ENCODE measurements at regions of chrX and their contacts with region 1.

Region 1: DNA sequence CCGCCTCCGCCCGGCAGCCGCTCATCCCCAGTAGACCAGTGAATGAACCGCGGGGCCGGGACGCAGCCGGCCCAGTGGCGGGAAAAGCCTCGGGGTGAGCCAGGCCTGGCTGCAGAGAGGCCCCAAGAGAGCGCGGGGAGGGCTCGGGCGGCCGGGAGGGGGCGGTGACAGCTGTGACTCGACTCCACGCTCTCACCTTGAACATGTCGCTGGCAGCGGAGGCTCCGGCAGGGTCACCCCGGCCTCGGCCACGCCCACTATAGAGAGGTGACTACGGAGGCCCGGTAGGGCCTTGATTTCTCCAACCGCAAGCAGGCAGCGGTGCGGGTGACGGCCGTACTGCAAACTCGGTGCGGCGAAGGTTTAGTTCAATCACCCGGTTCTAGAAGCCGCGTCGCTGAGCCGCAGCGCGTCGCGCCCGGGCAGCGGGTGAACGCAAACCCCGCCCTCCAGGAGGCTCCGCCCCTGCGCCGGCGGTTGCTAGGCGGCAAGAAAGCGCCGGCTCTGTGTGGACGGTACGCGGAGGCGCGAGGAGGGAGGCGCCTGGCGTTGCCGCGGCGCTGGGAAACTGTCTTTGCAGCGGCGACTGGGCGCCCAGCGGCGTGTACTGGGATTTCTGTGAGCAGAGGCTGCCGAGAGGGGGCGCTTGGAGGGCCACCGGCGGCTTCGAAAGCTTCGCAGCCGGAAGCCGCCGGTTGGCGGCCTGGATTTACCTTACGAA is at the starts of genes APOO and CXorf58:
- DNase-seq: peak; percentile 95
- ATAC-seq: peak; percentile 98 to 99
- H3K4me3 ChIP-seq: peak within 1 kb of the TSS; percentile 61
- H3K27ac ChIP-seq: peak within 1 kb of the TSS; percentile 85
- H3K4me1 ChIP-seq: peaks cover under 1% of the 10 kb centered on the region
- H3K27me3 ChIP-seq: no peaks in the 10 kb centered on the region
- CTCF ChIP-seq: peak; percentile 68
- total RNA-seq, gene APOO: 15.9 TPM
- total RNA-seq, gene CXorf58: 0.27 TPM

Region 2: GRCh38 chrX:23782863-23783568 is 124.6 kb before region 1 on chrX and contains the start of gene SAT1:
- intact Hi-C with region 1: loop called (anchors 10 kb)
- DNase-seq: peak; percentile 97
- ATAC-seq: peak; percentile 88 to 96
- H3K4me3 ChIP-seq: peak within 1 kb of the TSS; percentile 64
- H3K27ac ChIP-seq: peak within 1 kb of the TSS; percentile 95
- H3K4me1 ChIP-seq: peaks cover 9% of the 10 kb centered on the region
- H3K27me3 ChIP-seq: no peaks in the 10 kb centered on the region
- CTCF ChIP-seq: peak; percentile 79
- total RNA-seq, gene SAT1: 716 TPM

Measured in lower lobe of right lung (tissue), 2 donors.